ENCODE measurements at regions of chr14 and their contacts with region 1.

Region 1: DNA sequence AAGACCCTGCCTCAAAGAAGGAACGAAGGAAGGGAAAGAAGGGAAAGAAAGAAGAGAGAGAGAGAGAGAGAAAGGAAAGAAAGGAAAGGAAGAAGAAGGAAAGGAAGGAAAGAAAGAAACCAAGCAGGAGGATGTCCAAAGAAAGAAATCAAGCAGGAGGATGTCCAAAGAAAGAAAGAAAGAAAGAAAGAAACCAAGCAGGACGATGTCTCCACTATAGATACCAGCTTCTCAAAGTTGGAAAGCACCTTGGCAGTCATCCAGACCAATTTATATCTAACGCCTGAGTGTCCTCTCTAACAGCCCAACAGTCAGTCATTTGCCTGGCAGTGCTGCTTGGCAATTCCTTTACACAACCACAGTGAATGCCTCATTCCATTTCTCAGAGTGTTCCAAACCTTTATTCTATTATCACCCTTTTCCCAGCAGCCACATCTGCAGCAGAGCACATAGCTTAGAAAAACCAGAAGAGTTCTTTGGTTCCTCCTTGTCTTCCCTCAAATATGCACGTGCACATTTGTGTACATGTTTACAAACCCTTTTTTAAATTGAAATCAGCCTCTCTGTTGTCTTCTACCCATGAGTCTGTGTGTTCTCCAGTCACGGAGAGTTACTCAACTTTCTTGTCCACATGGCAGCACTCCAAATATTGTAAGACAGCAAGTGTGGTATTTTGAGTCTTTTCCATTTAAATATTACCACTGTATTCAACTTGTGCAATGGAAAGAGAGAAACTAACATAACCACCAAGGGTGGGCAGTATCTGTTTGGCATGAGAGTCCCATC is 138.4 kb downstream of the STXBP6 start:
- DNase-seq: peak; percentile 27
- ATAC-seq: peak; percentile 71
- H3K4me3 ChIP-seq: no peak overlapping the region
- H3K27ac ChIP-seq: no peak overlapping the region
- H3K4me1 ChIP-seq: no peaks in the 10 kb centered on the region
- H3K27me3 ChIP-seq: no peaks in the 10 kb centered on the region
- CTCF ChIP-seq: no peak
- EP300 ChIP-seq: no peak
- POLR2A ChIP-seq: no peak
- RAD21 ChIP-seq: no peak

Region 2: GRCh38 chr14:24843494-24843893 is 68.0 kb before region 1 on chr14:
- CTCF ChIA-PET with region 1: interaction called, 3 read pairs
- POLR2A ChIA-PET with region 1: no interaction called
- RAD21 ChIA-PET with region 1: interaction called, 4 read pairs
- SMC1A ChIA-PET with region 1: interaction called, 28 read pairs
- in situ Hi-C with region 1: no loop called
- intact Hi-C with region 1: no loop called
- DNase-seq: peak; percentile 13
- ATAC-seq: peak; percentile 97
- H3K4me3 ChIP-seq: no peak overlapping the region
- H3K27ac ChIP-seq: no peak overlapping the region
- H3K4me1 ChIP-seq: no peaks in the 10 kb centered on the region
- H3K27me3 ChIP-seq: no peaks in the 10 kb centered on the region
- CTCF ChIP-seq: no peak
- EP300 ChIP-seq: peak; percentile 10 to 50; a peak in 2 of 4 replicates
- POLR2A ChIP-seq: no peak
- RAD21 ChIP-seq: no peak

Region 3: DNA sequence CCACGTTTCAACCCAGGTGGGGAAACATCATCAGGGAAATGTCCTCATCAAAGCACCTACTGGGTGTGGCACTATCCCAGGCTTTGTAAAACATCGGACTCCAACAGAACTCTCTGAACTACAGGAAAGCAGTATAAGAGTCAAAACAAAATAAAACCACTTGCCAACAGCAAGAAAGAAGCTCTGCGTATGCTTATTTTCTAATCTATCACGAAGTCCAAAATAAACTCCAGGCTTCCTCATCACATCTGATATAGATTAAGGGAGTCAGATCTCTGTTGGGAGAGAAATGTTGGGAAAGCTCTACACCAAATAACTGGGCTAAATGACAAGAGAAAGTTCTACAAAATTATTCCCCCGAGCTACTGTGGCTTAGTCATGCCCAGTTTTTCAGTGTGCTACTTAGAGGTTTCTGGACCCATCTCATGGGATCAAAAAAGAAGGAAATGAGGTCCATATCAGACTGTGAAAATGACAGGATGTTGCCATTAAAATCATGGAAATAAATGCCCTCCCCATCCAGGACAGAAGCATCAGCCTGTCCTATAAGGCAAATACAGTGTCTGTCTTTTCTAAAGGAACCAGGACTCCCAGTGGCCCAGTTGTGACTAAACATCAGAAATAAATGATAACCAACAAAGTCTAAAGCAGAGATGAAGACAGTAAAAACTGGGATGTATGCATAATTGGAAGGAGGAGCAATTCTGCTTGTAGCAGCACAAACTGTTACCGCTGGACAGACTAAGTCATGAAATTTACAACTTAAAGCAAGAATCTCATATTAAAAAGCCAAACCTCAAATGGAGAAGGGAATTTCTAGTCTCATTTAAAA is 11.0 kb before region 1 on chr14:
- CTCF ChIA-PET with region 1: interaction called, 8 read pairs
- POLR2A ChIA-PET with region 1: no interaction called
- RAD21 ChIA-PET with region 1: interaction called, 8 read pairs
- SMC1A ChIA-PET with region 1: interaction called, 16 read pairs
- in situ Hi-C with region 1: no loop called
- intact Hi-C with region 1: no loop called
- DNase-seq: no peak
- ATAC-seq: no peak
- H3K4me3 ChIP-seq: no peak overlapping the region
- H3K27ac ChIP-seq: no peak overlapping the region
- H3K4me1 ChIP-seq: no peaks in the 10 kb centered on the region
- H3K27me3 ChIP-seq: no peaks in the 10 kb centered on the region
- CTCF ChIP-seq: no peak
- EP300 ChIP-seq: no peak
- POLR2A ChIP-seq: no peak
- RAD21 ChIP-seq: no peak

Region 4: GRCh38 chr14:24921903-24922302 is 10.4 kb after region 1 on chr14:
- CTCF ChIA-PET with region 1: interaction called, 11 read pairs
- POLR2A ChIA-PET with region 1: interaction called, 15 read pairs
- RAD21 ChIA-PET with region 1: interaction called, 35 read pairs
- SMC1A ChIA-PET with region 1: interaction called, 84 read pairs
- in situ Hi-C with region 1: no loop called
- intact Hi-C with region 1: no loop called
- DNase-seq: no peak
- ATAC-seq: peak; percentile 14; the same call in 1 of the 3 replicates
- H3K4me3 ChIP-seq: no peak overlapping the region
- H3K27ac ChIP-seq: no peak overlapping the region
- H3K4me1 ChIP-seq: no peaks in the 10 kb centered on the region
- H3K27me3 ChIP-seq: no peaks in the 10 kb centered on the region
- CTCF ChIP-seq: no peak
- EP300 ChIP-seq: no peak
- POLR2A ChIP-seq: no peak
- RAD21 ChIP-seq: no peak

Region 5: GRCh38 chr14:24928386-24928900 is 16.9 kb after region 1 on chr14:
- CTCF ChIA-PET with region 1: interaction called, 6 read pairs
- POLR2A ChIA-PET with region 1: interaction called, 15 read pairs
- RAD21 ChIA-PET with region 1: interaction called, 35 read pairs
- SMC1A ChIA-PET with region 1: interaction called, 84 read pairs
- in situ Hi-C with region 1: no loop called
- intact Hi-C with region 1: no loop called
- DNase-seq: no peak
- ATAC-seq: no peak
- H3K4me3 ChIP-seq: no peak overlapping the region
- H3K27ac ChIP-seq: no peak overlapping the region
- H3K4me1 ChIP-seq: no peaks in the 10 kb centered on the region
- H3K27me3 ChIP-seq: no peaks in the 10 kb centered on the region
- CTCF ChIP-seq: no peak
- EP300 ChIP-seq: no peak
- POLR2A ChIP-seq: no peak
- RAD21 ChIP-seq: no peak

Region 6: DNA sequence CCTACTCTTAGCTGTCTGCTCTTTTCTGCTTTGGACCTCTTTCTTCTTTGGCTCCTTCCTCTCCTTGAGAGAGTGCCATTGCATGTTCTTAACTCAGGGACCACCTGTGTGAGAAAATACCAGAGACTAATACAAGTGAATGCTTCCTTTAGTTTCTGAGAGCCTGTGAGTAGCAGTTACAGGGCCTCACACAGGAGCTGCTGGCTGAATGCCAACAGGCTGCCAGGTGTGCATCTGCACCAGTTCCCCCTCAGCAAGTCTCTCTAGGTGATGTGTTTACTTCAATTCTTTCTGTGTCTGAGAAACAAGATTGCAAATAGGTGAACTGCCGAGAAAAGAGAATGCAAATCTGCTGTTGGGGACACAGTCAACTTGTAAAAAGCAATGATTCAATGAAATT is 30.2 kb after region 1 on chr14:
- CTCF ChIA-PET with region 1: interaction called, 3 read pairs
- POLR2A ChIA-PET with region 1: interaction called, 3 read pairs
- RAD21 ChIA-PET with region 1: interaction called, 3 read pairs
- SMC1A ChIA-PET with region 1: interaction called, 18 read pairs
- in situ Hi-C with region 1: no loop called
- intact Hi-C with region 1: no loop called
- DNase-seq: no peak
- ATAC-seq: peak; percentile 36
- H3K4me3 ChIP-seq: no peak overlapping the region
- H3K27ac ChIP-seq: peak overlapping the region; percentile 30; the same call in 1 of the 2 replicates
- H3K4me1 ChIP-seq: no peaks in the 10 kb centered on the region; the same call in none of the 2 replicates
- H3K27me3 ChIP-seq: no peaks in the 10 kb centered on the region
- CTCF ChIP-seq: no peak
- EP300 ChIP-seq: no peak
- POLR2A ChIP-seq: no peak
- RAD21 ChIP-seq: no peak

Region 7: DNA sequence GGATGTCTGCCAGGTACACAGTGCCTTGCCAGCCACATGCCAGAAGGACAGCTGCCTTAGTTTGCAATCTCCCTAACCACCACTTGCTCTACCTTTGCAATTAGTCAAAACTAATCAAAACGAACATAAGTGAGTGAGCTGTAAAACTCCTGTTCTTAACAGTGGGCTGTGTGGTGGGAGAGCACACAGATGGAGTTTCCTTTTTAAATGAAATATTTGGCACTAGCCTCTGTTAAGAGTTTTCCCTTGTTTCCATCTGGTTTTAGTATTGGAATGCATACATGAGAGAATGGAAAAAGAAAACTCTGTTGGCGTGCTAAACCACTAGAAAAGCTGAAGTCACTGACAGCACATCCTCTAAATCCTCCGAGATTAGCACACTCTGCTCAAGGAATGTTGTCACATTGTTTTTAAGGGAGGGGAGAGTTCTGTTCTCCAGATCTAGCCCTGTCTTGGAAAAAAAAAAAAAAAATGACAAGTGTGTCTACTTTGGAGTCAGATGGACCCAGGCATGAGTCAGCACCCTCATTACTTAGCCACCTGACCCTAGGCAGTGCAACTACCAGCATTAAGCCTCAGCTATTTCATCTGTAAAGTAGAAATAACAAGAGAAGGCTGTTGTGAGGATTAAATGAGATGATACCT is 54.5 kb after region 1 on chr14:
- CTCF ChIA-PET with region 1: interaction called, 3 read pairs
- POLR2A ChIA-PET with region 1: interaction called, 3 read pairs
- RAD21 ChIA-PET with region 1: interaction called, 4 read pairs
- SMC1A ChIA-PET with region 1: interaction called, 11 read pairs
- in situ Hi-C with region 1: no loop called
- intact Hi-C with region 1: no loop called
- DNase-seq: no peak
- ATAC-seq: peak; percentile 69
- H3K4me3 ChIP-seq: no peak overlapping the region
- H3K27ac ChIP-seq: no peak overlapping the region
- H3K4me1 ChIP-seq: no peaks in the 10 kb centered on the region
- H3K27me3 ChIP-seq: no peaks in the 10 kb centered on the region
- CTCF ChIP-seq: no peak
- EP300 ChIP-seq: 0 out of 4 replicates have a peak, but pooled peaks of 1 of the 2 experiments have one; percentile 9
- POLR2A ChIP-seq: no peak
- RAD21 ChIP-seq: no peak

Region 8: DNA sequence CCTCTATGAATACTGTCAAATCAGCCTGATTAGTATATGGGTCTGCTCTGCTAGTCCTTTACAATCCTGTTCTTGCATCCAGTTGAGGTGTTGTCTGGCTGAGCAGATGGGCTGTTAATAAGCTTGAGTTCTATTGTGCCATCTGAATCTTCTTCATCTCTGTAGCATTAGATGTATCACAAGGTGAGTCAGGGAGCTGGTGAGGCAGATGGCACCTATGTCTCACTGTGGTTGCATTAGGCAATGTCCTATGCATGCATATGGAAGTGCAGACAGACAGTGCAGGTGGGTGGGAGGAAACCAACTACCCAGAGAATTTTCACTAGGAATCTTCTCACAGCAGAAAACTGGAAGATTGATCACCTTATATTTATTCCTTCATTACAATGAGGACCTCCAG is 304.1 kb after region 1 on chr14:
- CTCF ChIA-PET with region 1: no interaction called
- POLR2A ChIA-PET with region 1: no interaction called
- RAD21 ChIA-PET with region 1: no interaction called
- SMC1A ChIA-PET with region 1: no interaction called
- in situ Hi-C with region 1: no loop called
- intact Hi-C with region 1: no loop called
- DNase-seq: no peak
- ATAC-seq: no peak
- H3K4me3 ChIP-seq: no peak overlapping the region
- H3K27ac ChIP-seq: no peak overlapping the region
- H3K4me1 ChIP-seq: no peaks in the 10 kb centered on the region
- H3K27me3 ChIP-seq: no peaks in the 10 kb centered on the region
- CTCF ChIP-seq: no peak
- EP300 ChIP-seq: no peak
- POLR2A ChIP-seq: no peak
- RAD21 ChIP-seq: no peak

Region 9: GRCh38 chr14:25461780-25462179 is 550.3 kb after region 1 on chr14:
- CTCF ChIA-PET with region 1: no interaction called
- POLR2A ChIA-PET with region 1: no interaction called
- RAD21 ChIA-PET with region 1: no interaction called
- SMC1A ChIA-PET with region 1: no interaction called
- in situ Hi-C with region 1: no loop called
- intact Hi-C with region 1: no loop called
- DNase-seq: no peak
- ATAC-seq: no peak
- H3K4me3 ChIP-seq: no peak overlapping the region
- H3K27ac ChIP-seq: no peak overlapping the region
- H3K4me1 ChIP-seq: no peaks in the 10 kb centered on the region
- H3K27me3 ChIP-seq: no peaks in the 10 kb centered on the region
- CTCF ChIP-seq: no peak
- EP300 ChIP-seq: no peak
- POLR2A ChIP-seq: no peak
- RAD21 ChIP-seq: no peak

Measured in GM12878 (cell line).